ENCODE measurements at regions of chr13 and their contacts with region 1.

Region 1: GRCh38 chr13:24127038-24127643 is 33.4 kb upstream of the SPATA13 start:
- DNase-seq: peak; percentile 67 to 91
- H3K4me3 ChIP-seq: peak overlapping the region; percentile 18; the same call in 1 of the 2 replicates
- H3K27ac ChIP-seq: peak overlapping the region; percentile 87
- H3K4me1 ChIP-seq: peaks cover 50% of the 10 kb centered on the region
- H3K27me3 ChIP-seq: no peaks in the 10 kb centered on the region
- CTCF ChIP-seq: no peak

Region 2: GRCh38 chr13:24148399-24149305 is 21.5 kb after region 1 on chr13:
- CTCF ChIA-PET with region 1: no interaction called
- POLR2A ChIA-PET with region 1: interaction called, 5 read pairs
- intact Hi-C with region 1: loop called (anchors 1 kb)
- DNase-seq: peak; percentile 81 to 99
- H3K4me3 ChIP-seq: peak overlapping the region; percentile 28; the same call in 1 of the 2 replicates
- H3K27ac ChIP-seq: peak overlapping the region; percentile 92
- H3K4me1 ChIP-seq: peaks cover 61% of the 10 kb centered on the region
- H3K27me3 ChIP-seq: no peaks in the 10 kb centered on the region
- CTCF ChIP-seq: peak; percentile 51; the same call in 1 of the 2 replicates

Region 3: DNA sequence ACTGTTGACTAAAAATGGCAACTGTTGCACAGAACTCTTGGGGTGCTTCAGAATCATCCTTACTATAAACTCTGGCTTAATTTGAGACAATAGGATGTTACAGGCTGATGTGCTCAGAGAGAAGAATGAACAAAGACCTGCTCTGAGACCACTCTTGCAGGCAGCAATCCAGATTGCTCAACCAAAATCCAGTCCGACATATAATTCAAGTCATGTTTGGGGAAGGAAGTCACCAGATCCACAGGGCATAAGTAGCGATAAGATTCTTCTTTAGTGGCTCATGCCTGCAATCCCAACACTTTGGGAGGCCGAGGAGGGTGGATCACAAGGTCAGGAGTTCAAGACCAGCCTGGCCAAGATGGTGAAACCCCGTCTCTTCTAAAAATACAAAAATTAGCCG is 1139.6 kb after region 1 on chr13:
- CTCF ChIA-PET with region 1: interaction called, 13 read pairs
- POLR2A ChIA-PET with region 1: no interaction called
- intact Hi-C with region 1: no loop called
- DNase-seq: no peak
- H3K4me3 ChIP-seq: no peak overlapping the region
- H3K27ac ChIP-seq: no peak overlapping the region
- H3K4me1 ChIP-seq: no peaks in the 10 kb centered on the region
- H3K27me3 ChIP-seq: no peaks in the 10 kb centered on the region
- CTCF ChIP-seq: no peak

Measured in PC-9 (cell line).